H1 (cell line): ENCODE measurements at regions of chr10 and their contacts with region 1.

Region 1: DNA sequence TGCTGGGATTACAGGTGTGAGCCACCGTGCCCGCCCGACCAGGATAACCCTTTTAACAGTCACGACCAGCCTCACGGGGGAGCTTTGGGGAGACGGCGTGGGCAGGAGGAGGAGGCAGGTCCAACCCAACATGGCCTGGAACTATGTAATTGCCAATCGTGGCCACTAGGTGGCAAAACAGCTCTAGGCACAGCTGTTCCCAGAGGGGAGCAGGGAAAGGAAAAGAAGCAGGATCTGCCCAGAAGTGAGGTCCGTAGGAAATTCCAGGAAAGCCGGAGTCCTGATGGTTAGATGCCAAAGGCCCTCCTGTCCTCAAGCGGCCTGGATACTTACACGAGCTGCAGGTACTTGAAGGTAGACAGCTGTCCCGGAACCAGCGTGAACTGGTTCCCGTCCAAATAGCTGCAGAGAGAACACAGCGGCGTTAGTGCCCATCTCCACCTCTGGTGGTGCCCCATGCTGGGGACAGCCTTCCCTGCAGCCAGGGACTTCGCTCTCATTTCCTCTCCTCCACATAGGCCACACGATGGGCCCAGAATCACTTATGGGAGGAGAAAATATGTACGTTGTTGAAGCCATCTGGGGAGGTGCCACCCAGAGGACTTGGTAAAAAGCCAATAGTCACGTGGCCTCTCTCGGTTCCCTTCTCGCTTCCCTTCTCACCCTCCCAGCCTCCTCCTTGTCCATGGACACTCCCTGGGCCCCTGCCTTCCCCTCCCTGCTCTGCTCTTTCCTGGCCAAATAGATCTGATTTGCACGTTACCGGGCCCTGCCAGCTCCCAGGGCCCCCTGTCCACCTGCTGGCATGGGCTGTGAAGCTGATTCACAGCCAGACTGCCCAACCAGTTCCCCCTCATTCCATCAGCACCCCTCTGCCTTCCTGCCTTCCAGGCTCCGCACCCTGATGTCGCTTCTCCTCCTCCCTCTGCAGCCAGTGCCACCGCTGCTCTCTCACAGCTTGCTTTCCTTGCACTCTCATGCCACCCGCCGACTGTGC is 148.1 kb downstream of the SLIT1 start:
- DNase-seq: peak; percentile 83 to 94
- H3K4me3 ChIP-seq: peak overlapping the region in 2 of 4 experiments; percentile 17 to 25; a peak in 2 of 8 replicates
- H3K27ac ChIP-seq: no peak overlapping the region
- H3K4me1 ChIP-seq: peaks cover under 1 to 7% (median 4%) of the 10 kb centered on the region in 4 experiments; a peak in 6 of 7 replicates
- H3K27me3 ChIP-seq: no peaks in the 10 kb centered on the region; a peak in 1 of 7 replicates
- CTCF ChIP-seq: peak; percentile 90 to 93 (median 90)
- EP300 ChIP-seq: no peak
- POLR2A ChIP-seq: no peak
- RAD21 ChIP-seq: peak; percentile 81 to 90

Region 2: DNA sequence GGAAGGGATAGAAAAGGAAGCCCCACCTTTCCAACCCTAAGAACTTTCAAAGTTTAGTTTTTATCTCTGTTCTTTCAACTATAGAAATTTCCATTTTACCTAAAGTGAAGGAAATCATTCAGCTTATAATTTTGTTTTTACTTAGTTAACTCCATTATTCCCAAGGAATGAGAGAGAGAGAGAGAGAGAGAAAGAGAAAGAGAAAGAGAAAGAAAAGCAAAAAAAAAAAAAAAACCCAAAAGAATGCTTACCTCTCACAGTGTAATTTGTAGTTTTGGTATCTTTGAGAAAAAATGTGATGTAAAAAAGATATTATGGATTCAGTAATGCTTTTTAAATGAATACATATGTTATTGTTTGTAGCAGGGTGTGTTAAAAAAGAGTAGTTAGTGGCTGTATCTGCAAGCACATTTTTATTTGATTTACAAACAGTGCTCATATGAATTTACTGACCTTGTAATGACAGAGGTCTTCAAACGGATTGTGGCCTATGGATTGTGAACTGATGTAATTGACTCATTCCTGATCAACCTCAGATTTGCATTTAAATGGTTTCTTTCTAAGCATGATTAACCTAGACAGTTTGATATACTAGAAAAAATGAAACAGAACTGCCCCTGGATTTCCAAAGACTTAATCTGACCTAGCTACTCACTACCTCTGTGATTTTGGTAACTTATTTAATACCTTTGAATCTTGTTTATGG is 140.6 kb before region 1 on chr10:
- CTCF ChIA-PET with region 1: no interaction called
- POLR2A ChIA-PET with region 1: no interaction called
- DNase-seq: no peak
- H3K4me3 ChIP-seq: no peak overlapping the region
- H3K27ac ChIP-seq: no peak overlapping the region
- H3K4me1 ChIP-seq: peaks cover 0 to 4% (median 0%) of the 10 kb centered on the region in 4 experiments; a peak in 1 of 7 replicates
- H3K27me3 ChIP-seq: no peaks in the 10 kb centered on the region
- CTCF ChIP-seq: no peak
- EP300 ChIP-seq: no peak
- POLR2A ChIP-seq: no peak
- RAD21 ChIP-seq: no peak

Region 3: GRCh38 chr10:96998329-96998888 is 39.3 kb before region 1 on chr10:
- CTCF ChIA-PET with region 1: interaction called, 16 read pairs
- POLR2A ChIA-PET with region 1: no interaction called
- DNase-seq: no peak
- H3K4me3 ChIP-seq: no peak overlapping the region
- H3K27ac ChIP-seq: no peak overlapping the region
- H3K4me1 ChIP-seq: no peaks in the 10 kb centered on the region
- H3K27me3 ChIP-seq: no peaks in the 10 kb centered on the region
- CTCF ChIP-seq: no peak
- EP300 ChIP-seq: no peak
- POLR2A ChIP-seq: no peak
- RAD21 ChIP-seq: no peak

Region 4: GRCh38 chr10:97048649-97049427 is 11.2 kb after region 1 on chr10:
- CTCF ChIA-PET with region 1: interaction called, 62 read pairs
- POLR2A ChIA-PET with region 1: no interaction called
- DNase-seq: no peak
- H3K4me3 ChIP-seq: no peak overlapping the region
- H3K27ac ChIP-seq: no peak overlapping the region
- H3K4me1 ChIP-seq: peaks cover 0 to 5% (median under 1%) of the 10 kb centered on the region in 4 experiments; a peak in 4 of 7 replicates
- H3K27me3 ChIP-seq: no peaks in the 10 kb centered on the region
- CTCF ChIP-seq: no peak
- EP300 ChIP-seq: no peak
- POLR2A ChIP-seq: no peak
- RAD21 ChIP-seq: no peak

Region 5: GRCh38 chr10:97059006-97059871 is 21.6 kb after region 1 on chr10:
- CTCF ChIA-PET with region 1: interaction called, 109 read pairs
- POLR2A ChIA-PET with region 1: no interaction called
- DNase-seq: peak in 1 of 2 experiments; percentile 77
- H3K4me3 ChIP-seq: no peak overlapping the region
- H3K27ac ChIP-seq: no peak overlapping the region
- H3K4me1 ChIP-seq: peaks cover 0 to 11% (median 2%) of the 10 kb centered on the region in 4 experiments; a peak in 3 of 7 replicates
- H3K27me3 ChIP-seq: no peaks in the 10 kb centered on the region
- CTCF ChIP-seq: peak; percentile 68 to 71 (median 69)
- EP300 ChIP-seq: no peak
- POLR2A ChIP-seq: no peak
- RAD21 ChIP-seq: peak; percentile 66 to 75

Region 6: GRCh38 chr10:97081621-97082235 is 44.1 kb after region 1 on chr10:
- CTCF ChIA-PET with region 1: interaction called, 33 read pairs
- POLR2A ChIA-PET with region 1: no interaction called
- DNase-seq: peak; percentile 63 to 90
- H3K4me3 ChIP-seq: no peak overlapping the region
- H3K27ac ChIP-seq: no peak overlapping the region
- H3K4me1 ChIP-seq: peaks cover 0 to 24% (median 14%) of the 10 kb centered on the region in 4 experiments; a peak in 5 of 7 replicates
- H3K27me3 ChIP-seq: no peaks in the 10 kb centered on the region
- CTCF ChIP-seq: peak; percentile 96 to 99 (median 97)
- EP300 ChIP-seq: no peak
- POLR2A ChIP-seq: no peak
- RAD21 ChIP-seq: peak; percentile 66 to 73

Region 7: GRCh38 chr10:97105303-97105702 is 67.6 kb after region 1 on chr10:
- CTCF ChIA-PET with region 1: no interaction called
- POLR2A ChIA-PET with region 1: no interaction called
- DNase-seq: no peak
- H3K4me3 ChIP-seq: no peak overlapping the region
- H3K27ac ChIP-seq: no peak overlapping the region
- H3K4me1 ChIP-seq: peaks cover 0 to 17% (median 12%) of the 10 kb centered on the region in 4 experiments; a peak in 6 of 7 replicates
- H3K27me3 ChIP-seq: no peaks in the 10 kb centered on the region; a peak in 1 of 7 replicates
- CTCF ChIP-seq: no peak
- EP300 ChIP-seq: no peak
- POLR2A ChIP-seq: no peak
- RAD21 ChIP-seq: no peak

Region 8: GRCh38 chr10:97234400-97234799 is 196.7 kb after region 1 on chr10:
- CTCF ChIA-PET with region 1: interaction called, 20 read pairs
- POLR2A ChIA-PET with region 1: no interaction called
- DNase-seq: no peak
- H3K4me3 ChIP-seq: no peak overlapping the region
- H3K27ac ChIP-seq: no peak overlapping the region
- H3K4me1 ChIP-seq: no peaks in the 10 kb centered on the region
- H3K27me3 ChIP-seq: no peaks in the 10 kb centered on the region
- CTCF ChIP-seq: peak in 2 of 3 experiments; percentile 31 to 57; a peak in 2 of 4 replicates
- EP300 ChIP-seq: no peak
- POLR2A ChIP-seq: no peak
- RAD21 ChIP-seq: peak; percentile 70 to 75